ENCODE measurements at regions of chr9 and their contacts with region 1.

Region 1: GRCh38 chr9:70435948-70436347 is 21.5 kb upstream of the KLF9 start:
- DNase-seq: no peak
- ATAC-seq: no peak
- H3K4me3 ChIP-seq: no peak overlapping the region
- H3K4me3 Mint-ChIP-seq: no peak overlapping the region
- H3K27ac ChIP-seq: no peak overlapping the region
- H3K27ac Mint-ChIP-seq: no peak overlapping the region
- H3K4me1 ChIP-seq: peaks cover 7% of the 10 kb centered on the region
- H3K4me1 Mint-ChIP-seq: peaks cover 6% of the 10 kb centered on the region
- H3K27me3 ChIP-seq: no peaks in the 10 kb centered on the region
- H3K27me3 Mint-ChIP-seq: no peaks in the 10 kb centered on the region
- CTCF ChIP-seq: no peak

Region 2: GRCh38 chr9:70457235-70457634 is 21.3 kb after region 1 on chr9:
- CTCF ChIA-PET with region 1: interaction called, 3 read pairs
- POLR2A ChIA-PET with region 1: no interaction called
- intact Hi-C with region 1: loop called in 1 of 2 experiments (anchors 1 kb)
- DNase-seq: no peak
- ATAC-seq: no peak
- H3K4me3 ChIP-seq: no peak overlapping the region
- H3K4me3 Mint-ChIP-seq: no peak overlapping the region
- H3K27ac ChIP-seq: no peak overlapping the region
- H3K27ac Mint-ChIP-seq: no peak overlapping the region
- H3K4me1 ChIP-seq: no peaks in the 10 kb centered on the region
- H3K4me1 Mint-ChIP-seq: no peaks in the 10 kb centered on the region
- H3K27me3 ChIP-seq: no peaks in the 10 kb centered on the region
- H3K27me3 Mint-ChIP-seq: no peaks in the 10 kb centered on the region
- CTCF ChIP-seq: no peak